ENCODE measurements at regions of chr11 and their contacts with region 1.

Region 1: DNA sequence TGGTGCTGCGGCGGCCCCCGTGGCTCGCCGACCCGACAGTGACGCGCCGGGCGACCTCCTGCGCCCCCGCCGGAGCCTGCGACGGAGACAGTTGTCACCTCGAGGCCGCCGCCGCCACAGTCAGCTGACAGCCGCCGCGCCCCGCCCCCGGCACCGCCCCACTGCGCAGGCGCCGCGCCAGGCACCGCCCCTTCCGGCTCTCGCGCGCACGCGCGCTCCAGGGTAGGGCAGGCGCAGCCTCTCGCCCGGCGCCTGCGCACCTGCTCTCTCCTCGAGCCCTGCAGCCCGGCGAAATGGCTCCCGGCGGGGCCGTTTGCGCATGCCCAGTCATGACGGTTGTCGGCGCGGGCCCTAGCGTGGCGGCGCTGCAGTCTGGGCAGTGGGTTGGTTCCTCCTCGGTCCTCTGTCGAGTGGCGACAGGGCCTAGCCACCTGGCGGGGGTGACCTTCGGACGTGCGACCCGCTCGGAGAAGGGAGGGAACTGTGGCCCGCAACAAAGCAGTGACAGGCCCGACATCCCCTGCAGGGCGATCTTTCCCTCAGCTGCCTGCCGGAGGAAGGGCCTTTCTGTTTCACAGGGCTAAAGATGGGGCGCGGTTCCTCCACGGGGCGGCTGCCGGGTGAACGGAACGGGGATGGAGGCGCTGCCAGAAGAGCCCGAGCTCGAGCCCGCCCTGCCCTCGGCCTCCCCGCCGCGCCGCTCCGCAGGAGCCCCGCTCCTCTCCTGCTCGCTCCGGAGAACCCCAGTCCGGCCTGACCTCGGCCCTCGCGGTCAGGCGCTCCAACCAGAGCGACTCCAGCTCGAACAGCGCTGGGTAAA is at the start of gene TOLLIP:
- DNase-seq: peak; percentile 98
- H3K4me3 ChIP-seq: peak within 1 kb of the TSS; percentile 75 to 91 (median 87)
- H3K27ac ChIP-seq: peak within 1 kb of the TSS; percentile 93 to 95 (median 94)
- H3K4me1 ChIP-seq: peaks cover 0 to 54% (median 48%) of the 10 kb centered on the region in 4 donors
- H3K27me3 ChIP-seq: no peaks in the 10 kb centered on the region
- CTCF ChIP-seq: no peak
- EP300 ChIP-seq: no peak
- POLR2A ChIP-seq: peak; percentile 76 to 84
- total RNA-seq, gene TOLLIP: 25.0 to 39.1 (median 36.0) TPM

Region 2: GRCh38 chr11:1262172-1263006 is 47.3 kb before region 1 on chr11:
- intact Hi-C with region 1: loop called (anchors 5 kb)
- DNase-seq: peak; percentile 97
- H3K4me3 ChIP-seq: peak overlapping the region; percentile 30 to 50 (median 46)
- H3K27ac ChIP-seq: peak overlapping the region; percentile 65 to 74 (median 72)
- H3K4me1 ChIP-seq: peaks cover 0 to 17% (median 15%) of the 10 kb centered on the region in 4 donors
- H3K27me3 ChIP-seq: no peaks in the 10 kb centered on the region
- CTCF ChIP-seq: no peak
- EP300 ChIP-seq: no peak
- POLR2A ChIP-seq: peak in 1 of 2 donors; percentile 65

Region 3: GRCh38 chr11:1382831-1383607 is 73.3 kb after region 1 on chr11:
- intact Hi-C with region 1: loop called (anchors 5 kb)
- DNase-seq: peak; percentile 94
- H3K4me3 ChIP-seq: peak overlapping the region; percentile 36 to 59 (median 46)
- H3K27ac ChIP-seq: peak overlapping the region; percentile 56 to 86 (median 72)
- H3K4me1 ChIP-seq: peaks cover 0 to 9% (median 8%) of the 10 kb centered on the region in 4 donors
- H3K27me3 ChIP-seq: no peaks in the 10 kb centered on the region
- CTCF ChIP-seq: no peak
- EP300 ChIP-seq: no peak
- POLR2A ChIP-seq: no peak

Region 4: DNA sequence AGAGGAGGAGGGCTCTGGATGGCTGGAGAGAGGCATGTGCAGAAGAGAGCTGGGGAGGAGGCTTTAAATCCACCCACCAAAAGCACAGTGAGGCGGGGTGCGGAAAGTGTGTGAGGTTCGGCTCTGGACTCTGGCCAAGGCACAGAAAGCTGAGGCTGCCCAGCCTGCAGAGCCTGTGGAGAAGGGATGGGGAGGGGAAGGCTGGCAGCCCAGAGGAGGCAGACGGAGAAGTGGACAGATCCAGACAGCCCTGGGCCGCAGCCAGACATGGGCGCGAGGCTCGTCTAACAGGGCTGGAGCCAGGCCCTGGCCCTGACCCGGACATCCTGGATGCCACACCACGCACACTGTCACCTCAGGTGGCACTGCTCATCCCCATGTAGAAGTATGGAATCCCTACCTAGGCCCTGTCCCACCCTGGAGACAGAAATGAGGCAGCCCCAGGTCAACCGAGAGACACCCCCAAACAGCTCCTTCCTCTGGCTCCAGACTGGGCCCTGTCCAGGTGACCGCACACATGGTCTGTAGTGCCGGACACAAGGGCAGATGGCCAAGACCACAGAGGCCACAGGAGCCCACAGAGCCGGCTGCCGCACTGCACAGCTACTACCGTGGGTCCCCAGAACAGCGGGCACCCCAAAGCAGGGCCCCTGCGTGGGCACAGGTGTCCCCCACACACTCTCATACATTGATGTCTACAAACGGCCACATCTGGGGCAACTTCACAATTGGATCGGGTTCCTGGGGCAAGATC is 193.4 kb after region 1 on chr11:
- intact Hi-C with region 1: loop called (anchors 10 kb)
- DNase-seq: peak; percentile 91
- H3K4me3 ChIP-seq: no peak overlapping the region
- H3K27ac ChIP-seq: peak overlapping the region; percentile 37 to 75 (median 68)
- H3K4me1 ChIP-seq: peaks cover 0 to 75% (median 62%) of the 10 kb centered on the region in 4 donors
- H3K27me3 ChIP-seq: no peaks in the 10 kb centered on the region
- CTCF ChIP-seq: no peak
- EP300 ChIP-seq: no peak
- POLR2A ChIP-seq: no peak